Naive thymus-derived CD8-positive, alpha-beta T cell (primary cell): ENCODE measurements at regions of chr18 and their contacts with region 1.

Region 1: DNA sequence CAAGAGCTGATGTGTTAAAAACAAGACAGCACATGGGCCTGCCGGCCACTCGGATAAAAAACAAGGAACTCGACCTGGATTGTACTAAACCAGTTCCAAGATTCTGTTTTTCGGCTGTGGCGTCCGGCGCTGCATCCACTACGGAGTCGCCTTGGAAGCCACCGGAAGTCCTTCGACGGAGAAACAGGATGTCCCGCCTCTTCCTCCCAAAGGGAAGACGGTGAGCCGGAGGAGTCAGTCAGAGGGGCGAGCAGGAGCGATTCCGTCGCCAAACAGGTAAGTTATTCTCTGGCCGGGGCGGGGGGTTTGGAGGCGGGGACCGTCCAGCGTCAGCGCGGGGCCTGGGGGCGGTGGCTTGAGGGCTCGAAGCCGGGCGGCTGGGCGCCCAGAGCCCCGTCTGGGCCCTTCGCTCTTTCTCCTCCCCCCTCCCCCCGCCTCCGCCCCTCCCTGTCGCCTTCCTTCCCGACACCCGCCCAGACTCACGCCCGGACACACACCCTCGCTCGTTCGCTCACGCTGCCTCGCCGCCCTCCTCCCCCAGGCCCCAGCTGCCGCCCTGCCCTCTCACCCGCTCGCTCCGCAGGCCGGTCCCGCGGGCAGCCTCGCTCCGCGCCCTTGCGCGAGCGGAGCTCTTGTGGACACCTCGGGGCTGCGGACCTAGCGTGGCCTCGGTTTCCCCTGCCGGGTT is at the start of gene ZNF407:
- DNase-seq: peak; percentile 73 to 99 (median 85)
- ATAC-seq: peak; percentile 73 to 81
- H3K4me3 Mint-ChIP-seq: peak within 1 kb of the TSS; percentile 88 to 97 (median 94)
- H3K27ac Mint-ChIP-seq: peak within 1 kb of the TSS; percentile 97 to 99 (median 98)
- H3K4me1 Mint-ChIP-seq: peaks cover 27 to 73% (median 60%) of the 10 kb centered on the region in 4 donors
- H3K27me3 Mint-ChIP-seq: no peaks in the 10 kb centered on the region
- polyA plus RNA-seq, gene ZNF407: 5.0 to 6.0 (median 5.6) TPM

Region 2: GRCh38 chr18:74495581-74496507 is 102.0 kb before region 1 on chr18 and contains the start of gene CNDP2:
- POLR2A ChIA-PET with region 1: interaction called, 13 read pairs
- DNase-seq: peak; percentile 95 to 99 (median 97)
- ATAC-seq: peak; percentile 63 to 72
- H3K4me3 Mint-ChIP-seq: peak within 1 kb of the TSS; percentile 88 to 98 (median 96)
- H3K27ac Mint-ChIP-seq: peak within 1 kb of the TSS; percentile 96 to 99 (median 98)
- H3K4me1 Mint-ChIP-seq: peaks cover 27 to 56% (median 50%) of the 10 kb centered on the region in 4 donors
- H3K27me3 Mint-ChIP-seq: no peaks in the 10 kb centered on the region
- polyA plus RNA-seq, gene CNDP2: 97.0 to 139 (median 111) TPM

Region 3: GRCh38 chr18:74631623-74632283 is 33.9 kb after region 1 on chr18:
- POLR2A ChIA-PET with region 1: interaction called, 64 read pairs
- DNase-seq: peak in 8 of 10 donors; percentile 6 to 76 (median 48)
- ATAC-seq: peak; percentile 93 to 94
- H3K4me3 Mint-ChIP-seq: peak overlapping the region; percentile 67 to 93 (median 86)
- H3K27ac Mint-ChIP-seq: peak overlapping the region; percentile 92 to 97 (median 94)
- H3K4me1 Mint-ChIP-seq: peaks cover 39 to 58% (median 47%) of the 10 kb centered on the region in 4 donors
- H3K27me3 Mint-ChIP-seq: no peaks in the 10 kb centered on the region

Region 4: DNA sequence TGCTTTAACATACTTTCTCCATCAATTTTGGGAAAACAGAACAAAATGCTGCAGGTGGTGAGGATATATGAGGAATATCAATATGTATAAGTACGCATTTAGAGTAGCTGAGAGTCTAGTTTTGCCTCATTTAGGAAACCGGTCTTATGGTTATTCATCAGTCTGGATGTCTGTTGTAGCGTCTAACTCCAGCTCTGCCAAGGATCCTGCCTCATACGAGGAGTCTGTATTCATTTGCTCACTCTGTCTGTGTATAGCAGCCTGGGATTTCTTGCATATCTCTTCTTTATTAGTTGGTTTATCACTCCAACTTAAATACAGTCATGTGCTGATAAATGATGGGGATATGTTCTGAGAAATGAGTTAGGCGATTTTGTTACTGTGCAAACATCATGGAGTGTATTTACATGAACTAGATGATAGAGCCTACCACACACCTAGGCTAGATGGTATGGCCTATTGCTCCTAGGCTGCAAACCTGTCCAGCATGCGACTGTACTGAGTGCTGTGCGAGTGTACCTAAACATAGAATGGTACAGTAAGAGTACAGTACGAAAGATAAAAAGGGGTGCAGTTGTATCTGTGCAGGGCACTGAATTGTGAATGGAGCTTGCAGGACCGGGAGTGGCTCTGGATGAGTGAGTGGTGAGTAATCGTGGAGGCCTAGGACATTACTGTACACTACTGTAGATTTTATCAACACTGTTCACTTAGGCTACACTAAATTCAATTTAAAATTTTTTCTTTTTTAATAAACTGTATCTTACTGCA is 148.0 kb after region 1 on chr18:
- POLR2A ChIA-PET with region 1: no interaction called
- DNase-seq: no peak
- ATAC-seq: no peak
- H3K4me3 Mint-ChIP-seq: no peak overlapping the region
- H3K27ac Mint-ChIP-seq: peak overlapping the region in 1 of 10 donors; percentile 19
- H3K4me1 Mint-ChIP-seq: peaks cover 0 to 10% (median 3%) of the 10 kb centered on the region in 4 donors
- H3K27me3 Mint-ChIP-seq: no peaks in the 10 kb centered on the region

Region 5: DNA sequence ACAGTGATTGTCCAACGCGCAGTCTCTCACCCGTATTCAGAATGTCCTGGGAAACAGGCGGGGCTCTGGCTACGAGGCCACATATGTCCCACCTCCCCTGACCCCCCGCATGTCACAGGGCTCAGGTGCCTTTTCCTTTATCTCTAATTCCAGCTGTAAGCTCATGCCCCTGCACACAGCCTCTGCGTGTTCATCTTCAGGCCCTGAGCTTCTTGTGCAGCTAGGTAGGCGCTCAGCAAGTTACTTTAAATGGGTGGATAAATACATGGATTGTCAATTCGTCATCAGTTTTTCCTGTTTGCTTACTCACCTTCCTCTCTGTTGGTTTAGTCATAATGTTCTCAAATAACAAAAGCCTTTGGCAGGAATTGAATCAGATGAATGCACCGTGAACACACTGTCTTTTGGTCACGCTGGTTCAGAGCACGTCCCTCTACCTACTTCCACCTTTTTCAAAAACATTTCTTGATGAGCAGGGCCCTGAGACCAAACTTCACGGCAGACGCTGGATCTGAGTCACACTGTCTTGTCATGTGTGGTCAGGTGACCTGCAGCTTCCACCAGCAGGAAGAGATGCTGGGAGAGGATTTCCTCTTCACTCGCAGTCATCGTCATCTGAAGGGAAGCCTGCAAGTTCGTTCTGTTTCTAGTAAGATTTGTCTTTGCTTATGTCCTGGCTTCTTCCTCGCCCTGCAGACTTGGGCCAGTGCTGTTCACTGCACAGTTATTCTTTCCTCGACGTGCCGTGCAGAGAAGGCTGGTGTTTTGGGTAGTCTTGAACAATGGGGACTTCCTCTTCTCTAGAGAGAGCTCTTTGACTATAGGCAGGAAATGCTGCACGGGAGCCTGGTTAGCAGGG is 473.0 kb after region 1 on chr18:
- POLR2A ChIA-PET with region 1: interaction called, 11 read pairs
- DNase-seq: peak in 9 of 10 donors; percentile 36 to 83 (median 58)
- ATAC-seq: peak; percentile 85 to 87
- H3K4me3 Mint-ChIP-seq: peak overlapping the region; percentile 76 to 93 (median 90)
- H3K27ac Mint-ChIP-seq: peak overlapping the region; percentile 92 to 100 (median 96)
- H3K4me1 Mint-ChIP-seq: peaks cover 25 to 54% (median 40%) of the 10 kb centered on the region in 4 donors
- H3K27me3 Mint-ChIP-seq: no peaks in the 10 kb centered on the region

Region 6: DNA sequence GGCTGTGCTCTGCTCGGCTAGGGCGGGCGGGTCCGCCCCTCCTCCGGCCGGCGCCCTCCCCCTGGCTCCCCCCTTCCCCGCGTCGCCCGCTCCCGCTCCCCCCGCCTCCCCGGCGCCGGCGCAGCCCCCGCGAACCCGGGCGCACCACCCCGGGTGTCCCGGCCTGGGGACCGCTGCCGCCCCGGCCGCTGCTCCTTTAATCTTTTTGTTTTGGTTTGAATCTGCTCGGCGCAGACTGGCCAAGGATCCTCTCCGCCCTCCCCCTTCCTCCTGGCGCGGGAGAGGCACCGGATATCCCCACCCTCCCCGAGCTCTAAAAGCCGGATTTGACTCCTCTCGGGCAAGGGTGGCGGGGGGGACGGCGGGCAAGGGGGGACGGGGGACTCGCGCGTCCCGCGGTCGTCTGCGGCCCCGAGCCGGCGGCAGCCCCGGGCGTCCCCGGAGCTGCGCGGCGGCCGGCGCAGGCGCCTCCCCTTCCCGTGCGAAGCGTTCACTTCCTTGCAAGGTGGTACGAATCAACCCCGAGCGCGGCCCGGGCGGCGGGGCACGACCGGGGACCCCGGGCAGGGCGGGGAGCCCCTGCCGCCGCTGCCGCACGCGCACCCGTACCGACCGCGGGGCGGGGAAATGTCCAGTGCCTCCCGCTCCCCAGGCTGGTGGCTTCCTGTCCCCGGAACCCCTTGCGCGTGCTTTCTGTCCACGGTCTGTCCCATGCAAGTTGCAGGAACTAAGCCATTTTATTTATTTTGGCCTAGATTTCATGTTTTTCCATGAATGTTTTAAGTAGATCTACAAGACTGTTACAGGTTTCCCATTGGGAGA is 611.5 kb after region 1 on chr18 and contains the start of gene PTGR3:
- POLR2A ChIA-PET with region 1: interaction called, 24 read pairs
- DNase-seq: peak; percentile 49 to 85 (median 68)
- ATAC-seq: peak; percentile 48 to 58
- H3K4me3 Mint-ChIP-seq: peak within 1 kb of the TSS; percentile 95 to 100 (median 98)
- H3K27ac Mint-ChIP-seq: peak within 1 kb of the TSS; percentile 93 to 99 (median 97)
- H3K4me1 Mint-ChIP-seq: peaks cover 39 to 64% (median 59%) of the 10 kb centered on the region in 4 donors
- H3K27me3 Mint-ChIP-seq: no peaks in the 10 kb centered on the region
- polyA plus RNA-seq, gene PTGR3: 14.7 to 28.5 (median 19.6) TPM